Activated B cell treated with CpG ODN at 0.5 μM for 24 hours (primary cell): ENCODE measurements at regions of chr22 and their contacts with region 1.

Region 1: DNA sequence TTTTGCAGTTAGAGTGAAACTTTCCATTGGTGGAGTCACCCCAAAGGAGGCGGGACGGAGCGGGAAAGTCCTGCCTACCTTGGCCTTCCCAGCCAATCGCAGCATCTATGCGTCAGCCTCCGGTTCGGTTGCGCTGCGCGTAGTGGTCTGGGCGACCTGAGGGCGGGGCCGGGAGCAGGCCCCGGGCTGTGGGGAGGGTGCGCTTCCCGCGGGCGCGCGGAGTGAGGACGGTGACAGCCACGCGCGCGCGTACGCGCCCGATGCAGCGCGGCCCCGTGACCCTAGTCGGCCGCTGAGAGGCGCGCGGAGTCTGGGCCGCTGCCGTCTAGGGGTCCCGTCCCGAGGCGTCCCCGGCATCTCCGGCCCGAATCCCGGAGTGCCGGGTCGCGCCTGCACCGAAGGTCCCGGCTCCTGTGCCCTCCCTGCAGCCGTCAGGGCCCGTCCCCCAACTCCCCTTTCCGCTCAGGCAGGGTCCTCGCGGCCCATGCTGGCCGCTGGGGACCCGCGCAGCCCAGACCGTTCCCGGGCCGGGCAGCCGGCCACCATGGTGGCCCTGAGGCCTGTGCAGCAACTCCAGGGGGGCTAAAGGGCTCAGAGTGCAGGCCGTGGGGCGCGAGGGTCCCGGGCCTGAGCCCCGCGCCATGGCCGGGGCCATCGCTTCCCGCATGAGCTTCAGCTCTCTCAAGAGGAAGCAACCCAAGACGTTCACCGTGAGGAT is at the start of gene NF2:
- DNase-seq: peak; percentile 94
- ATAC-seq: peak; percentile 97
- H3K4me3 Mint-ChIP-seq: peak within 1 kb of the TSS; percentile 93
- H3K27ac Mint-ChIP-seq: peak within 1 kb of the TSS; percentile 95
- H3K4me1 Mint-ChIP-seq: peaks cover 24% of the 10 kb centered on the region
- H3K27me3 Mint-ChIP-seq: no peaks in the 10 kb centered on the region
- CTCF ChIP-seq: no peak
- total RNA-seq, gene NF2: 30.3 and 32.3 TPM in 2 replicates

Region 2: GRCh38 chr22:29267858-29268417 is 335.6 kb before region 1 on chr22 and contains the starts of genes EWSR1 and RHBDD3:
- CTCF ChIA-PET with region 1: no interaction called
- POLR2A ChIA-PET with region 1: no interaction called
- intact Hi-C with region 1: loop called (anchors 1 kb)
- DNase-seq: peak; percentile 99
- ATAC-seq: peak; percentile 86
- H3K4me3 Mint-ChIP-seq: peak within 1 kb of the TSS; percentile 96
- H3K27ac Mint-ChIP-seq: peak within 1 kb of the TSS; percentile 100
- H3K4me1 Mint-ChIP-seq: peaks cover 58% of the 10 kb centered on the region
- H3K27me3 Mint-ChIP-seq: no peaks in the 10 kb centered on the region
- CTCF ChIP-seq: no peak
- total RNA-seq, gene EWSR1: 347 and 382 TPM in 2 replicates
- total RNA-seq, gene RHBDD3: 17.7 and 17.9 TPM in 2 replicates

Region 3: GRCh38 chr22:29580200-29580810 is 23.2 kb before region 1 on chr22:
- CTCF ChIA-PET with region 1: no interaction called
- POLR2A ChIA-PET with region 1: interaction called, 5 read pairs
- intact Hi-C with region 1: loop called (anchors 1 kb)
- DNase-seq: no peak
- ATAC-seq: no peak
- H3K4me3 Mint-ChIP-seq: peak overlapping the region; percentile 92
- H3K27ac Mint-ChIP-seq: peak overlapping the region; percentile 86
- H3K4me1 Mint-ChIP-seq: peaks cover 18% of the 10 kb centered on the region
- H3K27me3 Mint-ChIP-seq: no peaks in the 10 kb centered on the region
- CTCF ChIP-seq: no peak

Region 4: DNA sequence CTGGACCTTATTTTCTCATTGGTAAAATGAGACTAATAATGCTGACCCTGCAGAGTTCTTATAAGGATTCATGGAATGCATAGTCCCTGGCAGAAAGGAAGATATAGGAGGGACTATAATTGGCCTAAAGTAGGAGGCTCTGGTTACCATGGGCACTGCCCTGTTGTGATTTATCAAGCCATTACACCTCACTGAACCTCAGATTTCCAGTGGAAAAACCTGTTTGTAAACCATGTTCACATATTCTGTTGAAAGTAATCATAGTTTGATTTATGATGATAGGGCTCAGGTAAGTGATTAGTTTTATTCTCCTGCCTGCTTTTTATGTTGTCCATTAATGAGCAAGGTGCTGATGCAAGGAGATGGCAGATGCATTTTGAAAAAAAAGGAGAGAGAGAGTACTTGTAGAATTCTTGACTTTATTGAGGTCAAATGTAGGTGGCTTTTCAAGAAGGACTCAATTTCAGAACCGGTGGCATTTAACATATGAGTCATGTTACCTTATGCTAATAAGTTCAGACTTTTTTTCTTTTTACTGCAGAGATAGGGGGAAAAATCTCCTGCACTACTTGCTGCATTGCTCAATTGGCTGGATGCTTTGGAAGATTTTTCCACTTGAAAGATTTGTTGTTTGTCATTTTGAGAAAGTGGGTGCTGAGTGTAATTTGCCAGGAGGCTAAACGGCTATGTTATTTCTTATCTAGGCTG is 14.6 kb after region 1 on chr22:
- CTCF ChIA-PET with region 1: no interaction called
- POLR2A ChIA-PET with region 1: interaction called, 6 read pairs
- intact Hi-C with region 1: loop called (anchors 2 kb)
- DNase-seq: no peak
- ATAC-seq: no peak
- H3K4me3 Mint-ChIP-seq: no peak overlapping the region
- H3K27ac Mint-ChIP-seq: peak overlapping the region; percentile 3
- H3K4me1 Mint-ChIP-seq: peaks cover 52% of the 10 kb centered on the region
- H3K27me3 Mint-ChIP-seq: no peaks in the 10 kb centered on the region
- CTCF ChIP-seq: no peak

Region 5: GRCh38 chr22:29689206-29689879 is 85.8 kb after region 1 on chr22:
- CTCF ChIA-PET with region 1: no interaction called
- POLR2A ChIA-PET with region 1: no interaction called
- intact Hi-C with region 1: no loop called
- DNase-seq: no peak
- ATAC-seq: no peak
- H3K4me3 Mint-ChIP-seq: no peak overlapping the region
- H3K27ac Mint-ChIP-seq: no peak overlapping the region
- H3K4me1 Mint-ChIP-seq: no peaks in the 10 kb centered on the region
- H3K27me3 Mint-ChIP-seq: no peaks in the 10 kb centered on the region
- CTCF ChIP-seq: no peak

Region 6: DNA sequence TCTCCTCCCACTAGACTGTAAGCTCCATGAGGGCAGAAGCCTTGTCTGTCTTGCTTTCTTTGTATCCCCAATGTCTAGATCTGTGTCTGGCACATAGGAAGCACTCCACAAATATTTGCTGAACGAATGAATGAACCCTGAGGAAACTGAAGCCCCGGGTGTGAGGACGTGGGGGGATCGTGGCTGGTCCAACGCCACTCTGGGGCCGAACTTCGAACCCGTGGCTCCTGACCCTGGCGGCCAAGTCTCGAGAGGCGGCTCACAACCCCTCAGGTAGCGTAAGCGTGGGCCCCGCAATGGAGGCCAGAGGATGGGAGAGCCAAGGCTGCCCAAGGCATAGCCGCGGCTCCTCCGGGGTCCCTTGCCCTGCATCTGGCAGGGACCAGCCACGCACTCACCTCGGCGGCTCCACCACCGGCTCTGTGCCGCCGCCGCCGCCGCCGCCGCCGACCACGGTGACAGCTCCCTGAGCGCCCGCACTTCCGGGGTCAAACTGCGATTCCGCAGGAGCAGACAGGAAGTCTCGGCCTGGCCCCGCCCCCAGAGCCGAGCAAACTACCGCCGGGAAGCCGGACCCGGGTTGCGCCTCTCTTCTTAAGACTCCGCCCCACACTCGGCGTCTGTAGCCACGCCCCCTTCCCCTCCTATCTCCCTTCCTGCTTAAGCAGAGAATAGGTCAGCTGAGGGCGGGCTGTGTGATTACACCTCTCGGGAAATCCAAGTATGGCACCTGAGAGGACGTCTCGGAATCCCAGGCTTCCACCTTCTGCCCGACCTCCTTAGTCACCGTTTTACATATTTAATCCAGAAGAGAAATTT is 234.5 kb after region 1 on chr22 and contains the start of gene ASCC2:
- CTCF ChIA-PET with region 1: no interaction called
- POLR2A ChIA-PET with region 1: no interaction called
- intact Hi-C with region 1: loop called (anchors 1 kb)
- DNase-seq: peak; percentile 97
- ATAC-seq: peak; percentile 99
- H3K4me3 Mint-ChIP-seq: peak within 1 kb of the TSS; percentile 97
- H3K27ac Mint-ChIP-seq: peak within 1 kb of the TSS; percentile 96
- H3K4me1 Mint-ChIP-seq: peaks cover 37% of the 10 kb centered on the region
- H3K27me3 Mint-ChIP-seq: no peaks in the 10 kb centered on the region
- CTCF ChIP-seq: no peak
- total RNA-seq, gene ASCC2: 88.1 and 89.7 TPM in 2 replicates

Region 7: GRCh38 chr22:30262917-30263741 is 659.6 kb after region 1 on chr22:
- CTCF ChIA-PET with region 1: no interaction called
- POLR2A ChIA-PET with region 1: no interaction called
- intact Hi-C with region 1: loop called (anchors 10 kb)
- DNase-seq: peak; percentile 72
- ATAC-seq: peak; percentile 13
- H3K4me3 Mint-ChIP-seq: peak overlapping the region; percentile 59
- H3K27ac Mint-ChIP-seq: peak overlapping the region; percentile 18
- H3K4me1 Mint-ChIP-seq: peaks cover 27% of the 10 kb centered on the region
- H3K27me3 Mint-ChIP-seq: no peaks in the 10 kb centered on the region
- CTCF ChIP-seq: peak; percentile 97

Region 8: DNA sequence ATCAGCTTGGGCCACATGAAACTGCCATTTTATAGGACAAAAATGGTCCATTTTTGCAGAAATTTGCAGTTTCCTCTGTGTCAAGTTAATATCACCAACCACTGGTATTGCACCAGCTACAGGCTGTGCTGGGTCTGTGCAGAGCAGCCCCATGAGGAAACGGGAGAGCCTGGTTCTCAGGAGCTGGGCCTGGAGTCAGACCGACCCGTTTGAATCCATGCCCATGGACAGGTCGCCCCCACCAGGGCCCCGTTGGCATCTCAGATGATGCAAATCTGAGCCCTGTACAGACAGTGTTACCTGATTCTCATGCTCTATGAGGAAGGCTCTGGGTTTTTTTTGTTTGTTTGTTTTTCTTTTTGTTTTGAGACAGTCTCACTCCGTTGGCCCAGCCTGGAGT is 952.9 kb after region 1 on chr22:
- CTCF ChIA-PET with region 1: no interaction called
- POLR2A ChIA-PET with region 1: no interaction called
- intact Hi-C with region 1: no loop called
- DNase-seq: no peak
- ATAC-seq: no peak
- H3K4me3 Mint-ChIP-seq: no peak overlapping the region
- H3K27ac Mint-ChIP-seq: no peak overlapping the region
- H3K4me1 Mint-ChIP-seq: no peaks in the 10 kb centered on the region
- H3K27me3 Mint-ChIP-seq: no peaks in the 10 kb centered on the region
- CTCF ChIP-seq: no peak